Natural killer cell (primary cell): ENCODE measurements at regions of chr11 and their contacts with region 1.

Region 1: GRCh38 chr11:1832211-1832919 is 2.4 kb upstream of the SYT8 start:
- DNase-seq: peak; percentile 74 to 82
- ATAC-seq: peak; percentile 68 to 85 (median 85)
- H3K4me3 ChIP-seq: no peak overlapping the region
- H3K4me3 Mint-ChIP-seq: no peak overlapping the region
- H3K27ac ChIP-seq: no peak overlapping the region
- H3K27ac Mint-ChIP-seq: no peak overlapping the region
- H3K4me1 ChIP-seq: peaks cover 17% of the 10 kb centered on the region
- H3K4me1 Mint-ChIP-seq: peaks cover 0 to 6% of the 10 kb centered on the region in 2 donors
- H3K27me3 ChIP-seq: peaks cover 4% of the 10 kb centered on the region
- H3K27me3 Mint-ChIP-seq: peaks cover 12 to 20% of the 10 kb centered on the region in 2 donors
- CTCF ChIP-seq: peak; percentile 98

Region 2: DNA sequence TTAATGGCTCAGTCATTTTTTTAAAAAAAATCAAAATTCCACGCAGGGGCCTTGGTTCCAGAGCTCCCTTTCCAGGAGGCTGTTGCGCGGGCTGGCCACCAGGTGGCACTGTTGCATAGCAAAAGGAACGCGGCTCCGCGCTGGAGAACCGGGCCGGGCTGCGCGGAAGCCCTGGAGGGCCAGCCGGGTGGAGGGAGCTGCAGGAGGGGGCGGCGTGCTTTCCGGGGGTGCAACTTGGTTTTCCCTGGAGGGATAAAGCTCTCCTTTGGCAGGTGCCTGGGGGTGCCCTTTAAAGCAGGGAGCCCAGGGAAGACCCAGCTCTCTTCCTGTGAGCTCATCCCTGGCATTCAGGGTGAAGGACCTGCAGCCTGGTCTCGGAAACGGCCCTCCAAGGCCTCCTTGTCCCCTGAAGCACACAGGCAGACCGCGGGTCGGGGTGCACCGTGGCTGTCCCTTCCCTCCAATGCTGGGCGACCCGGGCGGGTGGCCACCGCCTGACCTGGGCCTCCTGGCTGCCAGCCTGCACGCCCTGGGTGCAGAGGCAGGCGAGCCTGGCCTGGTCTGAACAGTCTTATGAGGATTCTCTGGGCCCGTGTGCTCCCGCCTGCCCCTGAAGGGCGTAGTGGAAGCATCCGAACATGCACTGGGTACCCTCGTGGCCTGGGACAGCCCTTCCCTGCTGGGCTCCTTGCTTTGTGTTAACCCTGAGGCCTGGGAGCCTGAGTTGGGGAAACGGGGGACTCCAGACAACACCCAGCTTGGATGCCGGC is 179.4 kb before region 1 on chr11:
- intact Hi-C with region 1: loop called (anchors 2 kb)
- DNase-seq: peak; percentile 82 to 86
- ATAC-seq: peak; percentile 79 to 99 (median 95)
- H3K4me3 ChIP-seq: no peak overlapping the region
- H3K4me3 Mint-ChIP-seq: no peak overlapping the region
- H3K27ac ChIP-seq: no peak overlapping the region
- H3K27ac Mint-ChIP-seq: no peak overlapping the region
- H3K4me1 ChIP-seq: peaks cover 4% of the 10 kb centered on the region
- H3K4me1 Mint-ChIP-seq: no peaks in the 10 kb centered on the region
- H3K27me3 ChIP-seq: no peaks in the 10 kb centered on the region
- H3K27me3 Mint-ChIP-seq: peaks cover 0 to 27% of the 10 kb centered on the region in 2 donors
- CTCF ChIP-seq: peak; percentile 97